Gastrocnemius medialis (tissue), 4 donors: ENCODE measurements at regions of chr1 and their contacts with region 1.

Region 1: DNA sequence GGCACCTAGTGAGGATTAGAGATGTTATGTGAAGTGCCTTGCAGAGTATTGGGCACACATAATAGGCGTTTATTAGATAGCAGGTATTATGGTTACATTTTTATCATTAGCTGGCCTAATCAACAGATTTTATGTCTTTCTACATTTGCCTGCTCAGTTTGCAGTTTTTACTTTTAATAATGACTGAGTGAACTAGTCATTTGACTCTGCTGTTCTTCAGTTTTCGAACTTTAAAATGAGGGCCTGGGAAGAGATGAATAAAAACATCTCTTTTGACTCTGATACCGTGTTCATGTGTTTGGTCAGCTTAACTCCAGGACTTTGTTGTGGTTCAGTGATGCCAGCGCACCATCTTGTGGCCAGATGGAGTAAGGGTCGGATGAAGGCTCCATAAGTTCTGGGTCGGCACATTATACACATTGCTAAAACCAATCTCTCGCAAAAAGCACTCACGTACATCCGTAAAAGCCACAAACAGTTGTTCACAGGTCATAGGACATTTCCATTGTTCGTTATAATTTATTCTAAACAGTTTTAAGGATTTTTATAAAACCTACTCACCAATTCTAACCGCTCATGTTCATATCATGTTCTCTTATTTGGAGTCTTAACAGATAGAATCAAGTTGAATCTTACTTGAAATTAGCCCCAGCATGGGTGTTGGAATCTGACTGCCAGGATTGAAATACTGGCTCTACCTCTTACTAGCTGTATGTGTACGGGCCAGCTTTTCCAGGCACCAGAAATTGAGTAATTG is 78.4 kb upstream of the GPR88 start:
- DNase-seq: peak; percentile 49 to 64
- ATAC-seq: peak; percentile 96 to 98
- H3K4me3 ChIP-seq: no peak overlapping the region
- H3K27ac ChIP-seq: peak overlapping the region; percentile 21 to 63 (median 29)
- H3K4me1 ChIP-seq: peaks cover 0 to 11% of the 10 kb centered on the region in 2 donors
- H3K27me3 ChIP-seq: no peaks in the 10 kb centered on the region
- CTCF ChIP-seq: peak; percentile 76 to 88 (median 81)
- POLR2A ChIP-seq: no peak

Region 2: DNA sequence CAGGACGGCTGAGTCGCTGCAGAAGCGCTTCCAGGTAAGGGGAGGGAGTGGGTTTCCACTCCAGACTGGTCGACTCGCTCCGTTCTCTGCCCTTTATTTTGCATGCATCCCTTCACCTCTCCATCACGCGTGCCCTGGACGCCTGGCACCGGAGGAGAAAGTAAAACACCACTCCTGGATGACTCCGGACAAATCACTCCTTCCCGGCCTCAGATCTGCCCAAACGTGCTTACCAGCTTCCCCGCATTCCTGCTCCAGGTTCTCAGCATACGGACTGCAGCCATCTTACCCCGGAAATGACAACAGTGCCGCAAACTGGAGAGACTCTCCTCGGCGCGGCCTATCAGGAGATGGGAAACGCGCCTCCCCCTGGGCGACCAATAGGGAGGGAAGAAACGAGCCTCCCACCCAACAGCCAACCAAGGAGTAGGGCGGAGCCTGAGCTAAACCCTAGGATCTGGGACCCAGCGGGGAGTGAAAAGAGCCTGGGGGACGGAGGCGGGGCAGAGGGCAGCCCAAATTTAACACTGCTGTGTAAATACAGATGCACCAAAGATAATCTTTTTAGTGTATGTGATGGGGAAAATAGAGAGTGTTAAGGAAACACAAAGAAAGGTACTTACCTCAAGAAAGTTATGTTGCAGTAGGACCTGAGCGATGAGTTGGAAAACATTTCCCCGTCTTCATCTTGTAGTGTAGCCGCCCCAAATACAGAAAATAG is 209.8 kb before region 1 on chr1 and contains the start of gene DBT:
- in situ Hi-C with region 1: loop called in 1 of 4 experiments (anchors 10 kb)
- intact Hi-C with region 1: no loop called
- DNase-seq: peak; percentile 96 to 97
- ATAC-seq: peak; percentile 100
- H3K4me3 ChIP-seq: peak within 1 kb of the TSS; percentile 79 to 96 (median 88)
- H3K27ac ChIP-seq: peak within 1 kb of the TSS; percentile 88 to 95 (median 90)
- H3K4me1 ChIP-seq: peaks cover 8 to 11% of the 10 kb centered on the region in 2 donors
- H3K27me3 ChIP-seq: no peaks in the 10 kb centered on the region
- CTCF ChIP-seq: no peak
- POLR2A ChIP-seq: peak; percentile 74 to 84
- total RNA-seq, gene DBT: 7.6 to 11.3 (median 9.6) TPM

Region 3: DNA sequence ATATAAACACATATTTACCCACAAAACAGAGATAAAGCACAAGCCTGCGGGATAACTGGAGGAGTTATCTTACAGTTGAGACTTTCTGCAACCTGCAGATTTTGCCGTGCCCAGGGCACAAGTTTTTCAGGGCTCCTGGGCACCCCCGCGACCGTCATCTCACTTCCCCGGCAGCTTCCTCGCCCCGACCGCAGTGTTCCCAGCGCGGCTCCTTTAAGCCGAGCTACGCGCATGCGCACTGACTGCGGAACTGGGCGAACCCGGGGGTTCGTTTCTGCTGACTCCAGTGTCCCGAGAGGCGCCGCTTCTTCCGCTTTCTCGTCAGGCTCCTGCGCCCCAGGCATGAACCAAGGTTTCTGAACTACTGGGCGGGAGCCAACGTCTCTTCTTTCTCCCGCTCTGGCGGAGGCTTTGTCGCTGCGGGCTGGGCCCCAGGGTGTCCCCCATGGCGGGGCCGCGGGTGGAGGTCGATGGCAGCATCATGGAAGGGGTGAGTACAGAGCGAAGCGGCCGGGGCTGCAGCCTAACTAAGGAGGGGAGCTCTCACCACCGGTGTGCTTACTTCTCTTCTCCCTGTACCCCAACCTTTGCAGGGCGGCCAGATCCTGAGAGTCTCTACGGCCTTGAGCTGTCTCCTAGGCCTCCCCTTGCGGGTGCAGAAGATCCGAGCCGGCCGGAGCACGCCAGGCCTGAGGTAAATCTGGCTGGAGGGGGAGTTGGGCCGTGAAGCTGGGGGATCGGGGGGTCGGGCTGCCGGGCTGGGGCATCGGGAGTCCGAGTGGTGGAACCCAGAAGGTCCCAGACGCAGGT is 193.4 kb before region 1 on chr1 and contains the start of gene RTCA:
- in situ Hi-C with region 1: no loop called
- intact Hi-C with region 1: loop called (anchors 2 kb)
- DNase-seq: peak; percentile 93 to 95
- ATAC-seq: peak; percentile 99
- H3K4me3 ChIP-seq: peak within 1 kb of the TSS; percentile 67 to 100 (median 91)
- H3K27ac ChIP-seq: peak within 1 kb of the TSS; percentile 82 to 93 (median 86)
- H3K4me1 ChIP-seq: peaks cover 15 to 19% of the 10 kb centered on the region in 2 donors
- H3K27me3 ChIP-seq: no peaks in the 10 kb centered on the region
- CTCF ChIP-seq: no peak
- POLR2A ChIP-seq: peak; percentile 64 to 73
- total RNA-seq, gene RTCA: 22.3 to 32.8 (median 24.8) TPM

Region 4: GRCh38 chr1:100277866-100278265 is 181.7 kb before region 1 on chr1:
- in situ Hi-C with region 1: loop called in 1 of 4 experiments (anchors 25 kb)
- intact Hi-C with region 1: no loop called
- DNase-seq: no peak
- ATAC-seq: no peak
- H3K4me3 ChIP-seq: no peak overlapping the region
- H3K27ac ChIP-seq: no peak overlapping the region
- H3K4me1 ChIP-seq: peaks cover 15% of the 10 kb centered on the region in 2 donors
- H3K27me3 ChIP-seq: no peaks in the 10 kb centered on the region
- CTCF ChIP-seq: no peak
- POLR2A ChIP-seq: no peak

Region 5: DNA sequence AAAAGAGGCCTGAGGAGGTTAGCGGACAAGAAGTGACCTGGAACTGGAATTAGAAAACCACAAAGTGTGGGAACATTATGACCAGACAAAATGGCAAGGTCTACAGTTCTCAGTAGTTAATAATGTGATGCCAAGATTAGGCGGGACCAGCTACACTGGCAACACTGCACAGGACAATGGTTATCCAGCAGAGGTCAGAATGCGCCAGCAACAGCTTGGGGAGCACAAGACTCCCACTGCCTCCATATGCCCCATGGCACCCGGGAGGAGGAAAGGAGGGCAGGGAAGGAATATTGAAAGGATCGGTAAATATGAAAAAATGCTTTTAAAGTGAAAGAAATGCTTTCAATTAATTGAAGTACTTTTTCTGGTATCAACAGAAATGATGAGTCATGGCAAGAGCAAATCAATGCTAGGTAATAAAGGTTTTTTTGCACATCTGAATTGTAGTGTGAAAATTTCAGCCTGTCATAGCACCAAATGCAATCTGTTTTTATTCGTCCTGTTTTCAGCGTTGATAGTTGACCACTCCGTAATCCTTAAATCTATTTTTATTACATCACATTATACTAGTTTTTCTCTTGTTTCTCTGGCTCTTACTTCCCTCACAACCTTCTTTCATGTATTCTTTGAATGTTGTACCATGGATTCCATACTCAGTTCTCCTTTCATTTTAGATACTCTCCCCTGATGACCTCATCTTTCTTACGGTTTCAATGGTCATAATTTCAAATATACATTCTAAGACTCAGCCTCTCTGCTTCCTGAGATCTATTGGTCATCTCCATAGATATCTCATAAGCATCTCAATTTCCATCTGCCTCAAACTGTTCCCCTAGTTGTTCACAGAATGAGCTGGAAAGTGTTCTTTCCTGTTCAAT is 290.7 kb after region 1 on chr1:
- in situ Hi-C with region 1: no loop called
- intact Hi-C with region 1: no loop called
- DNase-seq: no peak
- ATAC-seq: no peak
- H3K4me3 ChIP-seq: no peak overlapping the region
- H3K27ac ChIP-seq: no peak overlapping the region
- H3K4me1 ChIP-seq: no peaks in the 10 kb centered on the region
- H3K27me3 ChIP-seq: no peaks in the 10 kb centered on the region
- CTCF ChIP-seq: no peak
- POLR2A ChIP-seq: no peak

Region 6: DNA sequence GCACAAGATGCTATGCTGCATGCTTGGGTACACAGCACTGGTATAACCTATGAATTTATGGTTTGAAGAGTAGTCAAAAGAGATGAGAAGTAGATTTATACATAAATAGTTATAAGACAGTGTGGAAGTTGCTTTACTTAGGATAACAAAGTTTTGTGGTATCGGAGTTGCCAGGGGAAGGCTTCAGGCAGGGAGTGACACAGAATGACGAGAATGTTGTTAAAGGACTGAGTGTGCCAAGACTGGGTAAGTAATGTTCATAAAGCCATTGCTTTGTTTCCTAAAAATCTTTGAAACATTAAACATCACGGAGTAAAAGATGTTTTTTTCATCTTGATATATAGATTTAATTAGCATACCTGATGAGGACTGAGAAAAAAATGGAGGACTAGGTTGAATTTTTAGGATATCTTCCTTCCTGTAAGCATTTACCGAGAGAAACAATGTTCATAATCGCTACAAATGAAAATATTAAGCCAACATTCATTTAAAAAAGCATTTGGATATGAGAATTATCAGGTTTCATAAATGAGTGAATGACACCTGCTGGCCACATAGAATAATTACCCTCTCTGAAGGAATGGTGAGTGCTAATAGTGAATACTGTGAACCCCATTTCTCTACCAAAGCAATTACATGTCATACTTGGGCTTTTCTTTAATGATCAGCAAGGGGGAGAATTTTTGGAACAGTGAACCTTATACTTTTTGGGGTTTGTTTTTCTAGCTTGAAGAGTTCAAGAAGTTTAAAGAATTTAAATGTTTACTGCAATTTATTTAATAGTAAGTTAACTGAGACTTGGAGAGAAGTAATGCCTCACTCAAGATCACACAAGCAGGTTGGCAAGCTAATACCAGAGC is 406.7 kb after region 1 on chr1:
- in situ Hi-C with region 1: loop called in 1 of 4 experiments (anchors 25 kb)
- intact Hi-C with region 1: loop called (anchors 2 kb)
- DNase-seq: no peak
- ATAC-seq: peak in 1 of 2 donors; percentile 44
- H3K4me3 ChIP-seq: no peak overlapping the region
- H3K27ac ChIP-seq: no peak overlapping the region
- H3K4me1 ChIP-seq: peaks cover 0 to 4% of the 10 kb centered on the region in 2 donors
- H3K27me3 ChIP-seq: no peaks in the 10 kb centered on the region
- CTCF ChIP-seq: peak in 4 of 5 experiments; percentile 26 to 46 (median 41)
- POLR2A ChIP-seq: no peak

Region 7: GRCh38 chr1:100895540-100896483 is 436.3 kb after region 1 on chr1 and contains the start of gene SLC30A7:
- in situ Hi-C with region 1: loop called in 1 of 4 experiments (anchors 25 kb)
- intact Hi-C with region 1: no loop called
- DNase-seq: peak; percentile 87 to 92
- ATAC-seq: peak; percentile 80 to 86
- H3K4me3 ChIP-seq: peak within 1 kb of the TSS; percentile 66 to 99 (median 86)
- H3K27ac ChIP-seq: peak within 1 kb of the TSS; percentile 94 to 99 (median 94)
- H3K4me1 ChIP-seq: peaks cover 21 to 29% of the 10 kb centered on the region in 2 donors
- H3K27me3 ChIP-seq: no peaks in the 10 kb centered on the region
- CTCF ChIP-seq: no peak
- POLR2A ChIP-seq: peak; percentile 60 to 79
- total RNA-seq, gene SLC30A7: 1.5 to 6.2 (median 3.5) TPM